WTC11 (cell line): ENCODE measurements at regions of chr17 and their contacts with region 1.

Region 1: DNA sequence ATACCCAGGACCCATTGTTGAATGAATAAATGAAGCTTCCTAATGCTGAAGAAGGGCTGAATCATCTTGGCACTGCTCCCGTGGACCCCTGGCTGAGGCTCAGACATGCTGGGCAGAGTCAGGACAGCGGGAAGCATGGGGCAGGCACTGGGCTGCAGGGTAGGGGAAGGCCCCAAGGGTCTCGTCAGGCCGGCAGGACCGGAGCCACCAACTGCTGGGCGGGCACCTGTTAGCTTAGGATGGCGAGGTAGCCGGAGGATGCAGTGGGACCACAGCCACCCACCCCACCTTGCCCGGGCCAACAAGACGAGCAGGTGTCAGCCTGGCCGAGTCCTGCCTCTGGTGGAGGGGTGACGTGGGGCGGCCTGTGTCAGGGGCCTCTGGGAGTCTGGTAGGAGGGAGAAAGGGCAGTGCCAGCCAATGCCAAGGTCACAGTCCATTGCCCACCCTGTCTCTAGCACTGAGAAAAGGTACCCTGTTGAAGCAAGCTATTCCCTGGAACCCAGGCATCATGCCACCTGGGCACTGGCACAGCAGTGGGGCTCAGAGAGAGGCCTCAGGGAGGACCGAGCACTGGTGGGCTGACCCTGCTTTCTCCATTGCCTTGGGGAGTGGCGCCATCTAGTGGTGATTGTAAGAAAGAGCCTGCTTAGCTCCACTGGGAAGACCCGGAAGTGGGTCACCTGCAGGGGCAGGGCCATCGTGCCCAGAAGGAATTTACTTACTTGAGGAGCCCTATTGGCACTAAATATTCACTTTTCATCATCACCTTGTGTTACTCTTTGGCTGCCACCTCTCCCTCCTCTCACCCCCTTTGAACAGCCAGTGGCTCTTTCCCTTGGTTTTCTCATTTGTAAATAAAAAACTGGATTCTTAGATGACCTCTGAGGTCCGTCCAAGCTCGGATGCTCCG is 3.0 kb upstream of the DLX3 start:
- DNase-seq: peak; percentile 88
- ATAC-seq: peak; percentile 61
- H3K4me3 Mint-ChIP-seq: peak overlapping the region; percentile 65
- H3K27ac Mint-ChIP-seq: no peak overlapping the region
- H3K4me1 Mint-ChIP-seq: peaks cover 29% of the 10 kb centered on the region
- H3K27me3 Mint-ChIP-seq: peaks cover 86% of the 10 kb centered on the region
- CTCF ChIP-seq: peak; percentile 98

Region 2: DNA sequence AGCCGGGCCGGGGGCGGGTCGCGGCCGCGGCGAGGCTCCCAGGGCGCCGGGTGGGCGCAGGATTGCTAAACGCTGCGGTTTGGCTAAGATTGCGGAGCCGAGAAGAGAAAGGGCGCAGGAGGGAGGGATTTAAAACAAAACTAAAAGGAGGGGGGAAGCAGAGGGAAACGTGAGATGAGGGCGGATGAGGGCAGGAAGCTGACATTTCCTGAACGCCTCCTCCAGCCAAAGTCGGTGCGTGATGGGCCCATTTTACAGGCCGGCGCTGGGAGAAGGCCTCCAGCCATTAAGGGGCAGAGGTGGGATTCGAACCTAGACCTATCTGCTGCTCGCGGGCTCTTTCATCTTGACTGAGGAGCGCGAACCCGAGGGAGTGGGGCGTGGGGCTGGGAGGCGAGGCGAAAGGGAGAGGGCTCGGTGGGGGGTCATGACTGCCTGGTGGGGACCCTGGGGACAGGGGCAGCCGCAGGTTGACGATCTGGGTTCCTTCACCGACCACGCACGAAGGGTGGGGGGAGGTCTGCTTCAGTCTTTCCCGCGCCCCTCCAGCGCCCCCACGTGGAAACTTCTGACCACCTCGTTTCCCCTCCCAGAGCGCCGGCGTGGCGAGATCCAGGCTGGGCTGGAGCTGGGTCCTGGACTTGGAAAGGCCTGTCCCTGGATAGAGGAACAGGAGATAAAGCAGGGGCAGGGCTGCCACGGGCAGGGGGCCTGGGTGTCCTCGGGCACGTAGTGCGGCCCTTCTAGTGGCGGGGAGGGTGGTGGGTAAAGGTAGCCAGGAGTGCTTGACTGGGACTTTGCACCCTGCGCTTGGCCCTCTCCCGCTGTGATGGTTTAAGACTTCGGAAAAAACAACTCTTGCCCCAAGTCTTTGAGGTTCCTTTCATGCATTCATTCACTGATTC is 146.4 kb before region 1 on chr17:
- CTCF ChIA-PET with region 1: interaction called, 58 read pairs
- POLR2A ChIA-PET with region 1: no interaction called
- DNase-seq: peak; percentile 85
- ATAC-seq: peak; percentile 72
- H3K4me3 Mint-ChIP-seq: peak overlapping the region; percentile 74
- H3K27ac Mint-ChIP-seq: no peak overlapping the region
- H3K4me1 Mint-ChIP-seq: peaks cover 23% of the 10 kb centered on the region
- H3K27me3 Mint-ChIP-seq: peaks cover 54% of the 10 kb centered on the region
- CTCF ChIP-seq: peak; percentile 55

Region 3: DNA sequence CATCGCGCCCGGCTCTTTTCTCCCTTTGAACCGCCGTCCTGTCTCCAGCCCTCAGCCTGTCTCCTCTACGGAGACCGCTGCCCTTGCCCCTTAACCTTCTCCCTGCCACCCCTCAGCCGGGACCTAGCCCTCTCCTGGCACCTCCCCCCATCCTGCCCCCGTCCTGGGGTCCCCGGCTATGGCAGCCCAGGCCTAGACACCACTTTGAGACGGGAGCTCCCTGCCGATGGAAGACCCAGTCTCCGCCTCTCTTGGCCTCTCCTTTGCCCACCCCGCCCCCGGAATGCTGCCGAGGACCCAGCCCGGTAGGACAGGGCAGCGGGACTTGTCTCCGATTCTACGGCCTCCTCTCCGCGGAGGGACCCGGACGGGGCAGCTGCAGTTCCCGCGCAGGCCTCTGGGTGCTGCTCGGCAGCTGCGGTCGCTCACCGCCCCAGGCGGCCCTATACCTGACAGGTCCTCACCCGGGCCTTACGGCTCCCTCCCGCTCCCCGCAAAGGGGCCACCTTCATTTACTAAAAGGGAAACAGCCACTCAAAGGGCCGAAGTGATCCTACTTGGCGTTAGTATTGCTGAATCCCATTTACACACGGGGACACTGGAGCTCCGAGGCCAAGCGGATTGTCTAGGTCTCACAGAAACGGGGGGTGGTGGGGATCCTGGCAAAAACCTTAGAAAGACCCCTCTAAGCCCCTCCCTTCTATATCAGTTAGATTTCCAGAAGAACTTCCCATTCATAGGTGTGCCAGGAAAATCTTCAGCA is 117.6 kb before region 1 on chr17:
- CTCF ChIA-PET with region 1: interaction called, 105 read pairs
- POLR2A ChIA-PET with region 1: no interaction called
- DNase-seq: peak; percentile 96
- ATAC-seq: peak; percentile 89
- H3K4me3 Mint-ChIP-seq: peak overlapping the region; percentile 71
- H3K27ac Mint-ChIP-seq: no peak overlapping the region
- H3K4me1 Mint-ChIP-seq: peaks cover 30% of the 10 kb centered on the region
- H3K27me3 Mint-ChIP-seq: peaks cover 28% of the 10 kb centered on the region
- CTCF ChIP-seq: peak; percentile 96

Region 4: GRCh38 chr17:49910094-49910857 is 87.8 kb before region 1 on chr17:
- CTCF ChIA-PET with region 1: interaction called, 79 read pairs
- POLR2A ChIA-PET with region 1: no interaction called
- DNase-seq: peak; percentile 68
- ATAC-seq: peak; percentile 71
- H3K4me3 Mint-ChIP-seq: peak overlapping the region; percentile 81
- H3K27ac Mint-ChIP-seq: no peak overlapping the region
- H3K4me1 Mint-ChIP-seq: peaks cover 26% of the 10 kb centered on the region
- H3K27me3 Mint-ChIP-seq: peaks cover 84% of the 10 kb centered on the region
- CTCF ChIP-seq: no peak

Region 5: GRCh38 chr17:49959183-49959935 is 38.7 kb before region 1 on chr17:
- CTCF ChIA-PET with region 1: interaction called, 31 read pairs
- POLR2A ChIA-PET with region 1: interaction called, 5 read pairs
- DNase-seq: peak; percentile 51
- ATAC-seq: peak; percentile 43
- H3K4me3 Mint-ChIP-seq: no peak overlapping the region
- H3K27ac Mint-ChIP-seq: no peak overlapping the region
- H3K4me1 Mint-ChIP-seq: peaks cover 22% of the 10 kb centered on the region
- H3K27me3 Mint-ChIP-seq: peaks cover 75% of the 10 kb centered on the region
- CTCF ChIP-seq: no peak

Region 6: GRCh38 chr17:50079334-50080095 is 81.5 kb after region 1 on chr17:
- CTCF ChIA-PET with region 1: interaction called, 12 read pairs
- POLR2A ChIA-PET with region 1: no interaction called
- DNase-seq: peak; percentile 86
- ATAC-seq: peak; percentile 83
- H3K4me3 Mint-ChIP-seq: no peak overlapping the region
- H3K27ac Mint-ChIP-seq: no peak overlapping the region
- H3K4me1 Mint-ChIP-seq: peaks cover 11% of the 10 kb centered on the region
- H3K27me3 Mint-ChIP-seq: no peaks in the 10 kb centered on the region
- CTCF ChIP-seq: peak; percentile 53; the same call in 1 of the 2 replicates